Posterior vena cava (tissue), 2 donors: ENCODE measurements at regions of chr15 and their contacts with region 1.

Region 1: DNA sequence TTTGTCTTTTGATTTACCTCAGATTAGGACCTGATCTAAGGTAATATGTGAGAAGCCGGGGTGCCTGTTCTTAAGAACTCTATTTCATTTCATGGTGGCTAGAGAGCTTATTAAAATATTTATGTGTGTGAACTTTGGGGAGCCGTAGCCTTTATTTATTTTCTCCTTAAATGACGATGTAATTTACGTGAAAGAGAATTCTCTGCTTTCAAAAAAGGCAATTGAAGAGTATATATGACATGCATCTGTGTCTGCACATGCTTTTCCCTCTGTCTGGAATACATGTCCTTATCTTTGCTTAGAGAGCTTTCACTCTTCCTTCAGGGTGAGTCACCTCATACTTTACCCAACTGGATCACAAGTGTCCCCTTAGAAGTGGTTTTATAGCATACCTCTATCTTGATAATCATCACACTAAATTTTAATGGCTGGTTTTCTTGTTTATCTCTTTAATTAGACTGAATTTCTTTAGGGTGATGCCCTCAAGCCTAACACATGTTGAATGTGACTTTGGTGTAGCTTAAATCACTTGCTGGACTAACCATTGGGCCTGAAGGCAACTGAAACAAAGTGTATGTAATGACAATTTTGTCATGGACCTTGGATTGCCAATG is 178.8 kb downstream of the SV2B start:
- DNase-seq: no peak

Region 2: DNA sequence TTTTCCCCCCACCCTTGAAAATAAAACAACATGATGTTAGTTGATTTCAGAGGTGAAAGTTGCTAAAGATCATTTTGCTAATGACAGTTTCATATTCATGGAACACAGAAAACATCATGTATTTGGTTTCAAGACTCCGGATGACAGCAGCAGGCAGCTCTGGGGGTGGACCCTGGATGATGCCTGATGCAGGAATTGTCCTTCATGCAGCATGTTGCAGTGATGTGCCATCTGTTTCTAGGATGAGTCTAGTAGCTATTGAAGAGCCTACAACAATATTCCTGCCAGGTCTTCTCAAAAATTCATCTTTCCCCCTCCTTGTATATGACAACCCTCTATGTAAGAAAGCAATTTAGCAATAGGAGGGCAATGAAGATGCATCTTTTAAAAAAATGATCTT is 70.5 kb before region 1 on chr15:
- intact Hi-C with region 1: loop called in 1 of 2 experiments (anchors 2 kb)
- DNase-seq: no peak

Region 3: DNA sequence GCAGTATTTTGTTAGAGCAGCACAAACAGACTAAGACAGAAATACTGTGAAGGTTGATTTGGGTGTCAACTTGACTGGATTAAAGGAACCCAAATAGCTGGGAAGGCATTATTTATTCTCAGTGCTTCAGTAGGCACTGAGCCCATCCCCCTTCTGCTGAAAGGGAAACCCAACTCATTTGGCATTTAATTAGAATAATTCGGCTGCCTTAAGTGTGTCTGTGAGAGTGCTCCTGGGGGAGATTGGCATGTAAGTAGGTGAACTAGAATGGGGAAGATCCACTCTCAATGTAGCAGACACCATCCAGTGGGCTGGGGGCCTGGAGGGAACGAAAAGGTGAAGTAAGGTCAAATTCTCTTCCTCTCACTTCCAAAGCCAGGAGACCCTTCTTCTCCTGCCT is 554.2 kb after region 1 on chr15:
- intact Hi-C with region 1: loop called in 1 of 2 experiments (anchors 5 kb)
- DNase-seq: no peak